GM12878 (cell line): ENCODE measurements at regions of chr2 and their contacts with region 1.

Region 1: GRCh38 chr2:64644177-64645004 is 9.3 kb downstream of the SERTAD2 start:
- DNase-seq: no peak
- ATAC-seq: peak; percentile 76
- H3K4me3 ChIP-seq: peak overlapping the region; percentile 87
- H3K27ac ChIP-seq: peak overlapping the region; percentile 95
- H3K4me1 ChIP-seq: peaks cover 46% of the 10 kb centered on the region
- H3K27me3 ChIP-seq: no peaks in the 10 kb centered on the region
- CTCF ChIP-seq: no peak
- EP300 ChIP-seq: no peak; a peak in 1 of 4 replicates
- POLR2A ChIP-seq: peak; percentile 74
- RAD21 ChIP-seq: no peak

Region 2: GRCh38 chr2:64586883-64587481 is 57.4 kb before region 1 on chr2:
- CTCF ChIA-PET with region 1: interaction called, 20 read pairs
- POLR2A ChIA-PET with region 1: interaction called, 10 read pairs
- RAD21 ChIA-PET with region 1: interaction called, 20 read pairs
- SMC1A ChIA-PET with region 1: interaction called, 21 read pairs
- in situ Hi-C with region 1: no loop called
- intact Hi-C with region 1: loop called (anchors 2 kb)
- DNase-seq: no peak
- ATAC-seq: peak; percentile 30
- H3K4me3 ChIP-seq: no peak overlapping the region
- H3K27ac ChIP-seq: no peak overlapping the region
- H3K4me1 ChIP-seq: peaks cover 40% of the 10 kb centered on the region
- H3K27me3 ChIP-seq: no peaks in the 10 kb centered on the region
- CTCF ChIP-seq: peak; percentile 54 to 77 (median 63)
- EP300 ChIP-seq: no peak
- POLR2A ChIP-seq: no peak
- RAD21 ChIP-seq: peak; percentile 83

Region 3: GRCh38 chr2:64661741-64662169 is 17.4 kb after region 1 on chr2:
- CTCF ChIA-PET with region 1: interaction called, 154 read pairs
- POLR2A ChIA-PET with region 1: interaction called, 120 read pairs
- RAD21 ChIA-PET with region 1: interaction called, 221 read pairs
- SMC1A ChIA-PET with region 1: interaction called, 144 read pairs
- in situ Hi-C with region 1: no loop called
- intact Hi-C with region 1: no loop called
- DNase-seq: no peak
- ATAC-seq: peak; percentile 81
- H3K4me3 ChIP-seq: no peak overlapping the region
- H3K27ac ChIP-seq: peak overlapping the region; percentile 56; the same call in 1 of the 2 replicates
- H3K4me1 ChIP-seq: peaks cover 40% of the 10 kb centered on the region
- H3K27me3 ChIP-seq: no peaks in the 10 kb centered on the region
- CTCF ChIP-seq: peak in 1 of 3 experiments; percentile 23; a peak in 1 of 6 replicates
- EP300 ChIP-seq: peak in 1 of 2 experiments; percentile 33; a peak in 1 of 4 replicates
- POLR2A ChIP-seq: no peak
- RAD21 ChIP-seq: no peak

Region 4: DNA sequence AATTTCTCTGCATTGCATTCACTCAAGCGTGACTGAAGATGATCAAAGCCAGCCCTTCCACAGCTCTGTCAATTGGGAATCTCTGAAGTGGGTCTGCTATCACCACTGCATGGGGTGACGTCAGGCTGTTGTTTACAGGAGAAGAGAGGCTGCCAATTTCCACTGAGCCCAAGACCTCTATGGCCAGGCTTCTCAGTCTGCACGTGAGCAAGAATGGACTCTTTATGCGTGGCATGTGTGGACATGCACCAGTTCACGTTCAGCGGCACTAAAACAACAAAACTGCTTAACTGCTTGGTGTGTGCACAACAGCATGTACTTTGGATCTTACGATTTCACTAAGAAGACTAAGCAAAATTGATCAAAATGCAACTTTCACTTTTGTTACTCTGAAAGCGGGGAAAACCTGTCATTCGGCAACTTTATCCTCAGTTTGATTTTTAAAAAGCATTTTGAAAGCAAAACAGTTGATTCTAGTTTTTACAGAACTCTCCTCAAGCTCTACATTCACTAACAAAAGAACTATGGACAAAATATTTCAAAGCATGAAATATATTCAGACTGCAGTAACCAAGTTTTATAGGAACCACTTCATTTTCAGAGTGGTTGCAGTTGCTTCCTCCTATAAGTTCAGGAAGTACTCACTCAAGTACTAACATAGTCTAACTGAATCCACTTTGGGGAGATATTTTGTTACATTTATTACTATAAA is 86.3 kb after region 1 on chr2:
- CTCF ChIA-PET with region 1: interaction called, 31 read pairs
- POLR2A ChIA-PET with region 1: interaction called, 30 read pairs
- RAD21 ChIA-PET with region 1: interaction called, 212 read pairs
- SMC1A ChIA-PET with region 1: interaction called, 945 read pairs
- in situ Hi-C with region 1: no loop called
- intact Hi-C with region 1: loop called (anchors 2 kb)
- DNase-seq: peak; percentile 69
- ATAC-seq: peak; percentile 39
- H3K4me3 ChIP-seq: peak overlapping the region; percentile 58
- H3K27ac ChIP-seq: peak overlapping the region; percentile 83
- H3K4me1 ChIP-seq: peaks cover 48% of the 10 kb centered on the region
- H3K27me3 ChIP-seq: no peaks in the 10 kb centered on the region
- CTCF ChIP-seq: no peak
- EP300 ChIP-seq: no peak
- POLR2A ChIP-seq: no peak
- RAD21 ChIP-seq: no peak

Region 5: GRCh38 chr2:64767670-64768468 is 123.5 kb after region 1 on chr2:
- CTCF ChIA-PET with region 1: interaction called, 7 read pairs
- POLR2A ChIA-PET with region 1: interaction called, 6 read pairs
- RAD21 ChIA-PET with region 1: interaction called, 12 read pairs
- SMC1A ChIA-PET with region 1: interaction called, 11 read pairs
- in situ Hi-C with region 1: no loop called
- intact Hi-C with region 1: no loop called
- DNase-seq: no peak
- ATAC-seq: peak; percentile 94
- H3K4me3 ChIP-seq: peak overlapping the region; percentile 84
- H3K27ac ChIP-seq: peak overlapping the region; percentile 87
- H3K4me1 ChIP-seq: peaks cover 12% of the 10 kb centered on the region
- H3K27me3 ChIP-seq: no peaks in the 10 kb centered on the region
- CTCF ChIP-seq: peak in 2 of 3 experiments; percentile 7 to 29; a peak in 2 of 6 replicates
- EP300 ChIP-seq: peak in 1 of 2 experiments; percentile 40; a peak in 2 of 4 replicates
- POLR2A ChIP-seq: peak; percentile 78
- RAD21 ChIP-seq: no peak

Region 6: GRCh38 chr2:64865073-64865830 is 220.9 kb after region 1 on chr2:
- CTCF ChIA-PET with region 1: interaction called, 20 read pairs
- POLR2A ChIA-PET with region 1: interaction called, 9 read pairs
- RAD21 ChIA-PET with region 1: interaction called, 88 read pairs
- SMC1A ChIA-PET with region 1: interaction called, 23 read pairs
- in situ Hi-C with region 1: loop called (anchors 5 kb)
- intact Hi-C with region 1: loop called (anchors 1 kb)
- DNase-seq: no peak
- ATAC-seq: peak; percentile 84
- H3K4me3 ChIP-seq: peak overlapping the region; percentile 82
- H3K27ac ChIP-seq: peak overlapping the region; percentile 70
- H3K4me1 ChIP-seq: peaks cover 49% of the 10 kb centered on the region
- H3K27me3 ChIP-seq: no peaks in the 10 kb centered on the region
- CTCF ChIP-seq: peak; percentile 62 to 79 (median 64); a peak in 5 of 6 replicates
- EP300 ChIP-seq: no peak
- POLR2A ChIP-seq: no peak
- RAD21 ChIP-seq: peak; percentile 71